ENCODE measurements at regions of chr2 and their contacts with region 1.

Region 1: DNA sequence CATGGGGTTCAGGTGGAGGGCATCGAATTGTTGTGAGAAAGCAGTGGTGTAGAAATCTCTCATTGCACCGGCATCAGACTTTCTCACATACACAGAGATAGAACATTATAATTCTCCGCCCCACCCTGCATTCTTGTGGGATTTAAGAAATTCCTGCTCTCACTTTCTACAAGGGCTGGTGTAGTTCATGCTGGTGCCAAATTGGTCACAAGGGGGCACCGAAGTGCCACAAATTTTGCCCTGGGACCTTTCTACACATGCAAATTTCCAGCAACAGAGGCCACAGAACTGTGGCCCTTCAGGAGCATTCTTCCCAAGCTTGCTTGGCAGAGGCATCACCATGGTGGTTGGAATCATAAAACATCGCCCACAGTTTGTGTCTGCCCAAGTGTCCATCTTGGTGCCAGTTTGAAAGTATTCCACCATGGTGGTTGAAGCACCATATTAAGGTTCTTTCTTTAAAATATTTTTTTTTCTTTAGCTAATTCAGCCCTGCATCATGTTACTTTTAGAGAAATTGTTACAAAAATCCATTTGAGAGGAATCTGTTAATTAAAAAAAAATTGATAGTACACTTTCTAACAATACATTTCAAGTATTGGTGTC is 521.2 kb upstream of the FANCL start:
- DNase-seq: peak; percentile 65
- H3K4me3 ChIP-seq: no peak overlapping the region
- H3K27ac ChIP-seq: no peak overlapping the region
- H3K4me1 ChIP-seq: no peaks in the 10 kb centered on the region
- H3K27me3 ChIP-seq: peaks cover under 1% of the 10 kb centered on the region
- CTCF ChIP-seq: peak; percentile 69 to 83

Region 2: GRCh38 chr2:59025157-59025757 is 263.0 kb after region 1 on chr2:
- CTCF ChIA-PET with region 1: no interaction called
- dilution Hi-C with region 1: no loop called
- in situ Hi-C with region 1: no loop called
- intact Hi-C with region 1: loop called (anchors 5 kb)
- DNase-seq: peak; percentile 1
- H3K4me3 ChIP-seq: no peak overlapping the region
- H3K27ac ChIP-seq: no peak overlapping the region
- H3K4me1 ChIP-seq: no peaks in the 10 kb centered on the region
- H3K27me3 ChIP-seq: no peaks in the 10 kb centered on the region
- CTCF ChIP-seq: peak; percentile 43 to 82

Region 3: DNA sequence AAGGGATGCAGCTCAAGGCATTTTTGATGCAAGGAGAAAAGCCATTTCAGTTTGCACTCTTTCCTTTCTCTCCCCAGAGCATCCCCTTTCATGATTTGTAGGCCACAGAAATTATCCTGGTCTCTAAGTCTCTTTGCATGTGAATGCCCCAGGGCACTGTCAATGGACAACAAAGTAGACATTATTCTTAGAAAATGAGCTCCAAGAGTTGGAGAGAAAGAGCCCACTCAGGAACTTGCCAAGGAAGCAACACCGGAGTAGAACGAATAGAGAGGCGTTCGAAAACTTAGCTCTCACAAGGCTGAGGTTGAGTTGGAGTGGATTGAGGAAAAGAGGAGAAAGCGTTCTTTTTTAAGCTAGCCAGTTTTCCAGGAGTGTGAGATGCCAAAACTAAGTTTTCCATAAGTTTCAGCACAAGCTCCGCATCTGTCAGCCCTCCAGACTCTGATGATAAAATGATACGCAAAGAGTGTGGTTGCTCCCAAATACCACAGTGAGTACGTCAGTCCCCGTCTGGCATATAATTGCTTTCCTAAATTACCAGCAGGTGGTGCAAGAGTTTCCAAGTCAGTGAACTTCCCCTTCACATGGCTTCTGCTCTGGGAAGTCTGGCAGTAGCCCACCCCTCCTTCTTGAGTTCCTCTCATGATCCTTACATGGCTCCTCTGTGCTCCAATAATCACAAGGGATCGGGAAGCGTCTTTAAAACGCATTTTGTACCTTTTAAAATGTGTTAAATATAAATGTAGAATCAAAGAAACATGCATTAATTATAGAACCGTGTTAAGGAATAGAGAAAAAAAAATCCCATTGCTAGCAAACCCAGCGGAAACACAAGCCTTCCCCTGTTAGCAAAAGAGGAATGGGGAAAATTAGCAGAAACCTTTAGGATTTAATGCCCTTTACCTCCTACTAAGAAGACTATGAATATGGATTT is 539.5 kb after region 1 on chr2:
- CTCF ChIA-PET with region 1: no interaction called
- dilution Hi-C with region 1: no loop called
- in situ Hi-C with region 1: no loop called
- intact Hi-C with region 1: loop called (anchors 1 kb)
- DNase-seq: peak; percentile 62
- H3K4me3 ChIP-seq: no peak overlapping the region
- H3K27ac ChIP-seq: no peak overlapping the region
- H3K4me1 ChIP-seq: no peaks in the 10 kb centered on the region
- H3K27me3 ChIP-seq: no peaks in the 10 kb centered on the region
- CTCF ChIP-seq: peak; percentile 60 to 69

Region 4: GRCh38 chr2:60581433-60582282 is 1819.4 kb after region 1 on chr2:
- CTCF ChIA-PET with region 1: no interaction called
- dilution Hi-C with region 1: no loop called
- in situ Hi-C with region 1: no loop called
- intact Hi-C with region 1: loop called (anchors 1 kb)
- DNase-seq: peak; percentile 37
- H3K4me3 ChIP-seq: peak overlapping the region; percentile 23 to 45 (median 45)
- H3K27ac ChIP-seq: no peak overlapping the region
- H3K4me1 ChIP-seq: peaks cover 20% of the 10 kb centered on the region
- H3K27me3 ChIP-seq: no peaks in the 10 kb centered on the region
- CTCF ChIP-seq: peak; percentile 84 to 93

Measured in mammary epithelial cell (primary cell).